Activated CD4-positive, alpha-beta T cell treated with anti-CD3 and anti-CD28 coated beads for 36 hours (primary cell): ENCODE measurements at regions of chr2 and their contacts with region 1.

Region 1: GRCh38 chr2:134253804-134254203 is at the start of gene MGAT5:
- DNase-seq: no peak
- ATAC-seq: no peak
- H3K4me3 Mint-ChIP-seq: no peak within 1 kb of the TSS
- H3K27ac Mint-ChIP-seq: no peak within 1 kb of the TSS
- H3K4me1 Mint-ChIP-seq: peaks cover 90% of the 10 kb centered on the region
- H3K27me3 Mint-ChIP-seq: peaks cover 4% of the 10 kb centered on the region
- total RNA-seq, gene MGAT5: 22.2 to 25.7 TPM

Region 2: GRCh38 chr2:134169788-134170187 is 84.0 kb before region 1 on chr2:
- CTCF ChIA-PET with region 1: no interaction called
- POLR2A ChIA-PET with region 1: no interaction called
- intact Hi-C with region 1: loop called (anchors 1 to 5 kb)
- DNase-seq: peak; percentile 51
- ATAC-seq: peak; percentile 91
- H3K4me3 Mint-ChIP-seq: no peak overlapping the region
- H3K27ac Mint-ChIP-seq: peak overlapping the region; percentile 13
- H3K4me1 Mint-ChIP-seq: peaks cover 85% of the 10 kb centered on the region
- H3K27me3 Mint-ChIP-seq: no peaks in the 10 kb centered on the region

Region 3: GRCh38 chr2:134232868-134233727 is 20.7 kb before region 1 on chr2:
- CTCF ChIA-PET with region 1: interaction called, 4 read pairs
- POLR2A ChIA-PET with region 1: no interaction called
- intact Hi-C with region 1: loop called (anchors 1 kb)
- DNase-seq: peak; percentile 47
- ATAC-seq: peak; percentile 82
- H3K4me3 Mint-ChIP-seq: peak overlapping the region; percentile 36
- H3K27ac Mint-ChIP-seq: peak overlapping the region; percentile 76
- H3K4me1 Mint-ChIP-seq: peaks cover 81% of the 10 kb centered on the region
- H3K27me3 Mint-ChIP-seq: no peaks in the 10 kb centered on the region

Region 4: DNA sequence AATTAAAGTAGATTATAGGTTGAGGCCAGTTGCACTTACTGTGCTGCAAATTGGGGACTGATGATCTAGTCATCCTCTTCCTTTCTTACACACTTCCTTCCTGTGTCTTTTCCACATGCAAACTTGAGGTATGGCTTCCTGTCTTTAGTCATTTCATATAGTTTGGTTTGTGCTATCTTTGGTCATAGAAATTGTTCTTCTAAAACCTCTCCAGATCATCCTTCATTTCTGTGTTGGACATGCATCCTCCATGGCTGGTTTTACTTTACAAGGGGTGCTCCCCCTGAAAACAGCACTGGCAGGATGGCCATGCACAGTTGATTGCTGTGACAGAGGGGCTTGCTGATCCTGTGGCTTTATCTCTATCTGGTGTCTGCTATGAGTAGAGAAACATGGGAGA is 36.6 kb after region 1 on chr2:
- CTCF ChIA-PET with region 1: interaction called, 3 read pairs
- POLR2A ChIA-PET with region 1: no interaction called
- intact Hi-C with region 1: loop called (anchors 1 kb)
- DNase-seq: peak; percentile 22
- ATAC-seq: peak; percentile 66
- H3K4me3 Mint-ChIP-seq: no peak overlapping the region
- H3K27ac Mint-ChIP-seq: no peak overlapping the region
- H3K4me1 Mint-ChIP-seq: peaks cover 7% of the 10 kb centered on the region
- H3K27me3 Mint-ChIP-seq: no peaks in the 10 kb centered on the region

Region 5: DNA sequence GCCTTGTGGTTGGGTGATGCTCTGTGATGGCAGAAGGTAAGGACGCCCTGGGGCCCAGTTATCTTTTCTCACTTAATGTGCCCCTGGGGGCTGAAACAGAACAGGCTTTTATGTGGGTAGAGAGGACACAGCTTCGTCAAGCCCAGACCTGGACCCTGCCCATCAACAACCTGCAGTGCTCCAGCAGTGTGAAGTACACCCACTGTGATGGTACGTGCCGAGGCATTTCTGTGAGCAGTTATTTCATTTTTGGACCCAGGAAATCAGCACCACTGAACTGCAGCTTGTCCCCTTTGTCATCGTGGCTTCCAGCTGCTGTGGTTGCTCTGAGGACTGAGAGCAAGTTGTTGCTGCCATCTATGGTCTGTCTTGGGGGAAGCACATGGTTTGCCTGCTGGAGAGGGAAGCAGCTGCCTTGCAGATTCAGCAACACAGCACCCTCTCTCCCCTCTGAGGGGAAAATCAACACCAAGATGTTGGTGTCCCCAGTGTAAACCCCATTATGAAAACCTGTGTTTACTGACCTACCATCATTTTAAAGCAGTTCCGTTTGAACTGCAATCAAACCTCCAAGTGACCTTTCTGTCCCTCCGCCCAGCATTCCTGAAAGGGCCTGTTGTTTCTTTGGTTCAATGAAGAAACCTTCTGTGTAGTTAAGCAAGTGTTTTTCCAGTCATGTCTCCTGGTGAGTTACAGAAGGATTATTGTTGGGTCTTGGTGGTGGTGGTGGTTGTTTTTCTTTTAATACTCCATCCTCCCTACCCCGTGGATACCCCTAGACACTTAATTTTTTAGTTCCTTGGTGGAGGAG is 158.2 kb after region 1 on chr2:
- CTCF ChIA-PET with region 1: interaction called, 5 read pairs
- POLR2A ChIA-PET with region 1: no interaction called
- intact Hi-C with region 1: loop called in 1 of 2 experiments (anchors 5 kb)
- DNase-seq: peak; percentile 82
- ATAC-seq: peak; percentile 98
- H3K4me3 Mint-ChIP-seq: no peak overlapping the region
- H3K27ac Mint-ChIP-seq: no peak overlapping the region
- H3K4me1 Mint-ChIP-seq: peaks cover 41% of the 10 kb centered on the region
- H3K27me3 Mint-ChIP-seq: no peaks in the 10 kb centered on the region